PC-9 (cell line): ENCODE measurements at regions of chr4 and their contacts with region 1.

Region 1: DNA sequence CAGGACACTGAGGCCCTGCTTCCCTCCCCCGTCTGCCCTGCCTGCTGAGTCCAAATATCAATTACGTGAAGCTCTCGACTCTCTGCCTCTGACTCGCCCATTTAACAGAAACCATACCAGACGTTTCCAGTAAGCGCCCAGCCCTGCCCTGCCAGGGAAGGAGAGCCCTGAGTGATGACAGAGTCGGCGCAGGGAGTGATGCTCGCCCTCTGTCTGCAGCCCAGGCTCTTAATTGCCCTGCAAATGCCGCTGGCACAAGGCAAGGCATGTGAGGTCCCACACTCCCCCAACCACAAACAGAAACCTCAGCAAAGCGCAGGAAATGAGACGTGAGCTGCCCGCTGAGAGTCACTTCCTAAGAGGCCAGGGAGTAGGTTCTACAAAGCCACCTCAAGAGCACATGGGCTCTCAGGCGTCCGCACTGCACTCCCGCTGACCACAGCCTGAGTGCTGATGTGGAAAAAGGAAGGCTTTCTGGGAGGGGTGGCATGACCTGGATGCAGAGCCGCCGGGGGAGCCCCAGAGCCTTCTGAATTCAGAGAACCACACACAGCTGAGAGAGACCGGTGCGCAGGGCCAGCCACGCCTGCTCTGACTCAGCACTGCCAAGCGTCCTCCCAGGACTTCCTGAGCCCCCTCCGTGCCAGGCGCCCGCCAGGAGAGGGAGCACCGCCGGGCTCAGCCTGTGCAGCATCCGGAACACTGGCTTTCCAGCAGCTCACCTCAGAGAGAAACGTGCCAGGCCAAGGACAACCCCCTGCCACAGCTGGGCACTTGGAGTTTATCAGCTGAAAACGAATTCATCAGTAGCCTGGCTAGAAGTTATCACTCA is 5.3 kb downstream of the ZFYVE28 start:
- DNase-seq: peak; percentile 83 to 88
- H3K4me3 ChIP-seq: peak overlapping the region; percentile 50
- H3K27ac ChIP-seq: peak overlapping the region; percentile 76
- H3K4me1 ChIP-seq: peaks cover 29% of the 10 kb centered on the region
- H3K27me3 ChIP-seq: peaks cover 7% of the 10 kb centered on the region
- CTCF ChIP-seq: peak; percentile 44

Region 2: DNA sequence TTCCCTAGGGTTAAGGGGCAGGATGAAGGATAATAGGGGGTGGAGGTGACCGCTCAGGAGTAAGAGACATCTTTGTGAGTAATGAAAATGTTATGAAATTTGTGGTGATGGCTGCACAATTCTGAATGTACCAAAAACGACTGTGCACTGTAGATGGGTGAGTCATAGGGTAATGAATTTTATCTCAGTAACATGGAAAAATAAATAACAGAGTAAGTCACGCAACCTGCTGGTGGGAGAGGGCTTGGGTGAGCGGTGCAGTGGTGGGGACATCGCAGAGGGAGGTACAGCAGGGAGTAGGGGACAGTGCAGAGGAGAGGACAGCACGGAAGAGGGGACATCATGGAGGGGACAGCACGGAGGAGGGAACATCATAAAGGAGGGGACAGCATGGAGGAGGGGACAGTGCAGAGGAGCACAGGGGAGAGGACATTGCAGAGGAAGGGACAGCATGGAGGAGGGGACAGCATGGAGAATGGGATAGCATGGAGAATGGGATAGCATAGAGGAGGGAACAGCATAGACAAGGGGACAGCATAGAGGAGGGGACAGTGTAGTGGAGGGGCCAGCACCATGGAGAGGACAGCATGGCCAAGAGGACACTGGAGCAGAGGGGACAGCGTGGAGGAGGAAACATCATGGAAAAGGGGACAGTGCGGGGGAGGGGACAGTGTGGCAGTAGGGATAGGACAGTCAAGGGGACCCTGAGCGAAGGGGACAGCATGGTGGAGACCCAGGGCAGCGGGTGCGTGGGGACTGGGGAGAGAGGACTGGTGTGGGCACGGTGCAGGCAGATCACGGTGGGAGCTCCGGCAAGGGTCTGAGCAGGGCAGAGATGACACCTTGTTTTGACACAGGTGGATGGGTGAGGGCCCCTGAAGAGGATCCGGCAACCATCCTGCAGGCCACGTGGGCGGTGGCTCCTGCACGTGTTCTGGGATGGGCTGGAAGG is 82.7 kb before region 1 on chr4:
- CTCF ChIA-PET with region 1: no interaction called
- POLR2A ChIA-PET with region 1: no interaction called
- intact Hi-C with region 1: loop called (anchors 5 kb)
- DNase-seq: peak; percentile 28 to 82
- H3K4me3 ChIP-seq: no peak overlapping the region
- H3K27ac ChIP-seq: no peak overlapping the region
- H3K4me1 ChIP-seq: peaks cover 11% of the 10 kb centered on the region
- H3K27me3 ChIP-seq: no peaks in the 10 kb centered on the region
- CTCF ChIP-seq: no peak